HEK293 (cell line): ENCODE measurements at regions of chr3 and their contacts with region 1.

Region 1: GRCh38 chr3:129052675-129053074 is 7.9 kb upstream of the GP9 start:
- H3K4me3 ChIP-seq: no peak overlapping the region
- H3K27ac ChIP-seq: no peak overlapping the region
- H3K4me1 ChIP-seq: no peaks in the 10 kb centered on the region
- CTCF ChIP-seq: no peak

Region 2: GRCh38 chr3:128775912-128776542 is 276.6 kb before region 1 on chr3:
- CTCF ChIA-PET with region 1: no interaction called
- POLR2A ChIA-PET with region 1: no interaction called
- H3K4me3 ChIP-seq: no peak overlapping the region
- H3K27ac ChIP-seq: no peak overlapping the region
- H3K4me1 ChIP-seq: peaks cover 9% of the 10 kb centered on the region
- CTCF ChIP-seq: no peak

Region 3: DNA sequence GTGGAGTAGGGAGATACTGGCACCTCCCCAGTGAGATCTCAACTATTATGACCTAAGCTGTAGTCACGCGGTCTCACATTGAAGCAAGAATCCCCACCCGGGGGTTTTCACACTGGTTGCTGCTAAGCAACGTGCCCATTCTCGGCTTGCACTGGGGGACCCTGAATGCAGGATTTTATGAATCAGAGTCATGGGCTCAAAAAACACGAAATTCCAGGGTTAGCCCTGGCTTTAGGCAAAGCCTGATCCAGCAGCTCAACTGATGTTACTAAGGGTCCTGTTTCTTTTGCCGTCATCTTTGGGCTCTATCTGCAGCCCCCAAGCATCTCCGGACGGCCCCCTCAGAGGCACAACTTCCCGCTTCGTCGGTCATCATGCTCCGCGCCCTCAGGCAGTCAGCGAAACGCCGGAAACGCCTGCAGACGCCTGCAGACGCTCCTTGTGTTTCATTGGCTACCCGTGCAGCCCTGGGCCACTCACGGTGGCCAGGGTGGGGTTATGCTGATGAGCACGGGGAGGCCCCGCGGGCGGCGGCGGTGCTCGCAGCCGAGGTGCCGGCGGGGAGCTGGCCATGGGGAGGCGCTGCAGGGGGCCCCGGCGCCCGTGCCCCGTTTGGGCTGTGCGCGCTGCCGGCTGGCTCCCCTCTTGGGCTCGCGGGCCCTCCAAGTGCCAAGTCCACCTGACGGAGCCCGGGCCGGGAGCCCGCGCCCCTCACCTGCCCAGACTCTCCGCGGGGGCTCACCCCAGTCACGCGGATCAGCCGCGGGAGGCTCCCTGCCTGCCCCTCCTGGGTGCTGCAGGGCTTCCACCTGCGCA is 25.7 kb before region 1 on chr3:
- CTCF ChIA-PET with region 1: interaction called, 12 read pairs
- POLR2A ChIA-PET with region 1: interaction called, 6 read pairs
- H3K4me3 ChIP-seq: peak overlapping the region; percentile 49
- H3K27ac ChIP-seq: peak overlapping the region; percentile 1; the same call in 1 of the 2 replicates
- H3K4me1 ChIP-seq: no peaks in the 10 kb centered on the region
- CTCF ChIP-seq: 0 out of 2 replicates have a peak, but pooled peaks have one; percentile 31

Region 4: DNA sequence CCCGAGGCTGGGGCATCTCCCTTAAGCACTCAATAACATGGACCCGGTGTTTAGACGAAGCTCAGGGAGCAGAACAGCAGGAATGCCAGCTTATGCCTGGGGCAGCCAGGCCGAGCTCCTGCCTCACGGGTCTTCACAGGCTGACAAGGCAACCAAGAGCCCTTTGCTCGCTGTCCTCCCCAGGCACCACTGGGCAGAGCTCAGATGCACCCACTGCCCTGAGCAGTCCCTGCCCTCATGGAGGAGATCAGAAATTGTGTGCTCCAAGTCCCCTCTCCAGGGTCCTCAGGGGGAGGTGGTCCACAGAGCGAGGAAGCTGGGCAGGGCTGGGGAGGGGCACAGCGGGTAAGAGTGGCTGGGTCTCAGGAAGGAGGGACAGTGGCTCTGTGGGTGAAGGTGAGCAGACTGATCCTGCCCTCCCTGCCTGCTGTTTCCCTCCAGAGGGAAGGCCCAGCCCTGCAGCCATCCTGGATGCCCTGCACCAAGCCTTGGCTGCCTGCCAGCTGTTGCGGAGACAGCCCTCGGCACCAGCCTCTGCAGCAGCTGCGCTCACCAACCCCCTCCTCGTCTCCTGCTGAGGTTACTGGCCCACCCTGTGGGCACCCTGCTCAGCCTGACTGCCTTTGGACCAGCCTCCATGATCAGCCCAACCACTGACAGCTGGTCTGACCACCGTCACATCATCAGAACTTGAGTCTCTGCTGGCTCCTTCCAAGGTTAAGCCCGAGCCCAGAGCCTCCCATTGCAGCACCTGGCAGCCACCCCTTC is 13.2 kb before region 1 on chr3:
- CTCF ChIA-PET with region 1: interaction called, 10 read pairs
- POLR2A ChIA-PET with region 1: no interaction called
- H3K4me3 ChIP-seq: no peak overlapping the region
- H3K27ac ChIP-seq: no peak overlapping the region
- H3K4me1 ChIP-seq: no peaks in the 10 kb centered on the region
- CTCF ChIP-seq: no peak

Region 5: DNA sequence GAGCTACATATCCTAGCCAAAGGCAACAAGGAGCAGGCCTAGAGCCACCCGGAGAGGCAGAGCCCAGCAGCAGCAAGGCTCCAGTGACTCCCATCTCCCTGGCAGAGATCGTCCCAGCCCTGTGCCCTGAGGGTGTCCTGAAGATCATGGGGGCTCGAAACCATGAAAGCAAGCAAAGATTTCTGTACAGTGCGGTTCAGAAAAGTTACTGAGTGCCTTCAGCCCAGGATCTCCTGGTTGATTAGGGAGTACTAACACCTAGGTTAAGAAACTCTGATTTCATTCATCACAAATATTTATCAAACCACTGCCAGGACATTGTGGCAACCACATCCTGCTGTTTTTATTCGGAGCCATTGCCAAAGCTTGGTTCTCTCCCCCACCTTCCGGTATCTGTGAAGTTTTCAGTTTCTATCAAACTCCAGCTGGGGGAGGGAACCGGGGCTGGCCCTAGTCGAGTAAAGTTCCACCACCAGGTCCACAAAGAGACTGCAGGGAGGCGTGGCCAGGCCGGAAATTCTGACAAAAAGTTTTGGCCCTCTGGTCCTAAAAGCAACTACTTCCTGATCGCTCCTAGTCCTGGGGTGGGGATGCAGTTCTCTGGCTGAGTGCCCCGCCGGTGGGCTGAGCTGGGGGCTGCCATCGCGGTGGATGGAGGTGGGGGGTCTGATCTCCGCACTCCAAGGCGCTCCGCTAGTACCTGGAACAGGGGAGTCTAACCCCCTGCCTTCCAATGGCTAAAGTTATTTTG is 67.8 kb after region 1 on chr3:
- CTCF ChIA-PET with region 1: interaction called, 15 read pairs
- POLR2A ChIA-PET with region 1: interaction called, 6 read pairs
- H3K4me3 ChIP-seq: peak overlapping the region; percentile 68
- H3K27ac ChIP-seq: peak overlapping the region; percentile 46; the same call in 1 of the 2 replicates
- H3K4me1 ChIP-seq: peaks cover 15% of the 10 kb centered on the region
- CTCF ChIP-seq: no peak